ENCODE measurements at regions of chr7 and their contacts with region 1.

Region 1: DNA sequence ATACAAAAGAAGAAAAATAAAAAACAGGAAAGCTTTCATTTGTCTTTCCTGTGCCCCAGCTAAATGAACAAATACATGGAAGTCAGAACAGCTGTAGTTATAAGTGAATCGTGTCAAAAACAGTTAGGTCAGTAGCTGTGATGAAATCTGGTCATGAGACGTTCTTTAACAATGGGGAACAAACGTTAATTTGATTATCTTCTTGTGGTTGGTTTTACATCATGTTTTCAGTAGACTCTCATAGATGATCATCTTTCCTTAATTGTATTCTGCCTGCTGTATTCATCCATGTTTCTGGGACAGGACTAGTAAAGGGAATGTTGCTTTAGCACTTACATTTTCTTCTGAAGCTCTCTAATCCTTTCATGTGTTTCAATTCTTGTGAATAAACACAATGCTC is 97.0 kb downstream of the PCLO start:
- DNase-seq: no peak
- H3K4me3 ChIP-seq: no peak overlapping the region
- CTCF ChIP-seq: no peak

Region 2: DNA sequence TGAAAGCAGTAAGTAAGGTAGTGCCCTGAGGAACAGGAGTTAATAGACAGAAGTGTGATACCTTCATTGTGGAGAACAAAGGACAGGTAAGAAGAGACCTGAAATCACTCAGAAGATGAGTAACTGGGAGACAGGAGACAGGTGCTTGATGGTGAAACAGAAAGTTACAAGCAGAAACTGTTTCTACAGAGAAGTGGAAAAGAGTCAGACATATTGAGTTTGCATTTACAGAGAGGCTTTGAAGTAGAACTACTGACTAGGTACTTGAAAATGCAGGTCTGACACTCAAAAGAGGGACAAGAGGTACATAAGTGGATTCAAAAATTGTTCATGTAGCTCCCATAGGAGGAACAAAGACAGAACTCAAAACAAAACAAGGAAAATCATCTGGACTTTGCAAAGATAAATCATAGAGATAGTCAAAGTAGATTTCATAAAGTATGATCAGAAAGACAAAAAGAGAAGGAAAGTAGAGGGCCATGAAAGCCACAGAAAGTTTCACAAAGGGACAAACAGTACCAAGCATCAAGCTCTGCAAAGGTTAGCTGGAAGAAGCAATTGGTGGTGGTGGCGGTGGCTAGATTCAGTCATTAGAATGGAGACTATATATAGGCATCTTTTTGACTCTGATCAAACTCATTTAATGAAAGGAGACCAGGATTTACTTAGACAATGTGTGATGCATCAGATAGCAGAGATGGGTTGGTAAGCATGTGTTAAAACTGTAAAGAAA is 101.4 kb before region 1 on chr7:
- in situ Hi-C with region 1: loop called (anchors 5 kb)
- DNase-seq: no peak
- H3K4me3 ChIP-seq: no peak overlapping the region
- CTCF ChIP-seq: no peak

Region 3: DNA sequence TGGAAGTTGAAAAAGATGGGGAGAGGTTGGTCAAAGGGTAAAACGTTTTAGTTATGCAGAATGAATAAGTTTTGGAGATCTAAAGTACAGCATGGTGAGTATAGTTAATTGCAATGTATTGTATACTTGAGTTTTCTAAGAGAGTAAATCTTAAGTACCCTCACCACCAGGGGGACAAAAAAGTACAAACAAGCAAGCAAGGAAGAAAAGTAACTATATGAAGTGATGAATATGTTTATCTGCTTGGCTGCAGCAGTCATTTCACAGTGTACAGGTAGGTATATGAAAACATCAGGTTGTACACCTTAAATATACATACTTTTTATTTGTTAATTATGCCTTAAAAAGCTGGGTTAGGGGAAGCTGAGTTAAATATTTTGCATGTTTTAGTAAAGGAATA is 60.3 kb before region 1 on chr7:
- in situ Hi-C with region 1: no loop called
- DNase-seq: no peak
- H3K4me3 ChIP-seq: no peak overlapping the region
- CTCF ChIP-seq: peak; percentile 35

Measured in astrocyte of the cerebellum (primary cell).